HCT116 (cell line): ENCODE measurements at regions of chr10 and their contacts with region 1.

Region 1: GRCh38 chr10:121069061-121069850 is 218.1 kb downstream of the WDR11 start:
- DNase-seq: peak; percentile 32
- ATAC-seq: no peak
- H3K4me3 ChIP-seq: no peak overlapping the region
- H3K27ac ChIP-seq: no peak overlapping the region
- H3K4me1 ChIP-seq: peaks cover 0 to 12% of the 10 kb centered on the region in 2 experiments; a peak in 2 of 4 replicates
- H3K27me3 ChIP-seq: no peaks in the 10 kb centered on the region
- CTCF ChIP-seq: no peak
- POLR2A ChIP-seq: no peak
- RAD21 ChIP-seq: no peak

Region 2: GRCh38 chr10:120850911-120851865 is 218.1 kb before region 1 on chr10 and contains the start of gene WDR11:
- CTCF ChIA-PET with region 1: no interaction called
- POLR2A ChIA-PET with region 1: no interaction called
- RAD21 ChIA-PET with region 1: no interaction called
- intact Hi-C with region 1: no loop called
- DNase-seq: peak; percentile 93
- ATAC-seq: peak; percentile 98
- H3K4me3 ChIP-seq: peak within 1 kb of the TSS; percentile 85 to 92
- H3K27ac ChIP-seq: peak within 1 kb of the TSS; percentile 51
- H3K4me1 ChIP-seq: peaks cover 0 to 18% of the 10 kb centered on the region in 2 experiments; a peak in 2 of 4 replicates
- H3K27me3 ChIP-seq: no peaks in the 10 kb centered on the region
- CTCF ChIP-seq: no peak
- POLR2A ChIP-seq: peak; percentile 93
- RAD21 ChIP-seq: 0 out of 2 replicates have a peak, but pooled peaks have one; percentile 24
- total RNA-seq, gene WDR11: 48.3 TPM

Region 3: DNA sequence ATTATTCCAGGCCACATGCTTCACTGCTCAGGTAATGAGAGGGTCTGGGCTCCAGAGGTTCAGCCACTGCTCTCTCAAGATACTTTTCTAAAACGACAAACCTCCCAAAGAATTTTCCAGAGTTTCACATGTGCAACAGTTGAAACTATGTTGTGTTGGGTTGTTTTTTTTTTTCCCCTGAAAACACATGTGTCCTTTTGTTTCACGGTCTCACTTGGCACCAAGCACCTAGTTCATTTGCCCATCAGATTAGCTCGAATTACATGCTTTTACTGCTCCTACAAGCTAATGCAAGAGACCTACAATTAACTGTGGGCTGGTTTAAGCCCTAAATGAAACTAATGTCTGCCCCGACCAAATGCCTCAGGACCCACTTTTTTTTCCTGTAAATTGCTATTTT is 215.7 kb after region 1 on chr10:
- CTCF ChIA-PET with region 1: no interaction called
- POLR2A ChIA-PET with region 1: no interaction called
- RAD21 ChIA-PET with region 1: no interaction called
- intact Hi-C with region 1: no loop called
- DNase-seq: no peak
- ATAC-seq: no peak
- H3K4me3 ChIP-seq: no peak overlapping the region
- H3K27ac ChIP-seq: no peak overlapping the region
- H3K4me1 ChIP-seq: no peaks in the 10 kb centered on the region
- H3K27me3 ChIP-seq: peaks cover 43% of the 10 kb centered on the region; the same call in 1 of the 2 replicates
- CTCF ChIP-seq: no peak
- POLR2A ChIP-seq: no peak
- RAD21 ChIP-seq: no peak

Region 4: DNA sequence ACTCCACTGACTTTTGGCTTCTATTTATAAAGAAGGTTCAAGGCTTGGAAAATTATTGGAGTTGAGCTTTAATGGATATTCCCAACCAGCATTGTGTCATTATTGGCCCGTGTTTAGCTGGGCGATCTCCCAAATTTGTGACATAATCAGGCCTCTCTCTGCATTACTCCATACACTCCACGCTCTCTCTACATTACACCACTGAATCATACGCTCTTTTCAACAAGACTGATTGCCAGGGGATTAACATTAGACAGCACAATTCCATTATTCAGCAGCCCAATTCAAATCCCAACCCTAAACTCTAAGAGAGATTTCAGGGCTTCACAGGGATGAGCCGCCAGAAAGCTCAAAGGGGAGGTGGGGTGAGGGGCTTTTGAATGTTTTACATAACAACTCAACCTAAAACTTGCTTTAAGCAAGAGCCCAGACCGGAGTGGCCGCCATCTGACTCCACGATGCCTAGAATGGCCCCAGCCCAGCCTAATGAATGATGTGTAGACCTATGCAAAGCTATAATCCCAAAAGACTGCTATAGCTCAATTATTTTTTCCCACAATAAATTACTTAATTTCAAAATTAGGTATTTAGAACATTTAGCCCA is 467.2 kb after region 1 on chr10:
- CTCF ChIA-PET with region 1: no interaction called
- POLR2A ChIA-PET with region 1: no interaction called
- RAD21 ChIA-PET with region 1: no interaction called
- intact Hi-C with region 1: no loop called
- DNase-seq: no peak
- ATAC-seq: no peak
- H3K4me3 ChIP-seq: no peak overlapping the region
- H3K27ac ChIP-seq: no peak overlapping the region
- H3K4me1 ChIP-seq: no peaks in the 10 kb centered on the region
- H3K27me3 ChIP-seq: no peaks in the 10 kb centered on the region
- CTCF ChIP-seq: no peak
- POLR2A ChIP-seq: no peak
- RAD21 ChIP-seq: no peak

Region 5: DNA sequence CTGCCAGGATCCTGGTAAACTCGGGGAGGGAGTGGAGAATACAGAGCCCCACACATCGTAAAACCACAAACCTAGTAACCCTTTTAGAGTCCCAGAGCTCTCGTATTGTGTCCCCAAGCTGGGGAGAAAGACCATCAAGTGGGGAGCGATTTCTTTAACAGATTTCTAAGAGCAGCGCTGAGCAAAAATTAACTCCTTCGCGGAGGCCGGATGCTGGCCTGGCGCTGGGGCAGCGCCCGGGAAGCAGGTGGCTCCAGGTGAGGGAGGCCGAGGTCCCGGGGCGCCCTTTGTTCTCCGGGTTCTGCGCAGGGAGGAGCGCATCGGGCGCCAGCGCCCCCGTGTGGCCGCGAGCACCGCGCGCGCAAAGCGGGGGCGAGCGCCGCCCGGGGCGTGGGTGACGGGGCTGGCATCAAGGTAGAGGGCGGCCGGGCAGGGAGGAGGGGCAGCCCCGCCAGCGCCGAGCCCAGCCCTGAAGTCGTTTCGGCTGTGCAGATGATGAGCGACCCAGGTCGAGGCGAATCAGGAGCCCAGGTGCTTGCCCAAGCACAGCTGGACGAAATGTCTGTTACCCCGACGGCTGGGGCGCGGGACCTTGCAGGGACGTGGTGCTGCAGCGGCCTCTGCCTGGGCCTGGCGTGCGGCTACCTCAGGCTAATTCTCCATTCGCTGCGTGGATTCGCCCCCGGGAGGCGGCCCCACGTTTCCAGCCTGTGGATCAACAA is 539.4 kb after region 1 on chr10:
- CTCF ChIA-PET with region 1: no interaction called
- POLR2A ChIA-PET with region 1: no interaction called
- RAD21 ChIA-PET with region 1: no interaction called
- intact Hi-C with region 1: loop called (anchors 1 kb)
- DNase-seq: peak; percentile 43
- ATAC-seq: peak; percentile 95
- H3K4me3 ChIP-seq: peak overlapping the region; percentile 17 to 18
- H3K27ac ChIP-seq: no peak overlapping the region; the same call in 1 of the 2 replicates
- H3K4me1 ChIP-seq: peaks cover 7 to 17% of the 10 kb centered on the region in 2 experiments; a peak in 3 of 4 replicates
- H3K27me3 ChIP-seq: no peaks in the 10 kb centered on the region
- CTCF ChIP-seq: peak; percentile 90 to 98 (median 93)
- POLR2A ChIP-seq: no peak
- RAD21 ChIP-seq: peak; percentile 91

Region 6: GRCh38 chr10:121662945-121663917 is 594.0 kb after region 1 on chr10:
- CTCF ChIA-PET with region 1: interaction called, 7 read pairs
- POLR2A ChIA-PET with region 1: no interaction called
- RAD21 ChIA-PET with region 1: no interaction called
- intact Hi-C with region 1: loop called (anchors 1 kb)
- DNase-seq: peak; percentile 22
- ATAC-seq: peak; percentile 87
- H3K4me3 ChIP-seq: no peak overlapping the region
- H3K27ac ChIP-seq: no peak overlapping the region
- H3K4me1 ChIP-seq: peaks cover 0 to 5% of the 10 kb centered on the region in 2 experiments; a peak in 1 of 4 replicates
- H3K27me3 ChIP-seq: no peaks in the 10 kb centered on the region
- CTCF ChIP-seq: peak; percentile 47 to 78 (median 71); a peak in 5 of 6 replicates
- POLR2A ChIP-seq: no peak
- RAD21 ChIP-seq: peak; percentile 71

Region 7: DNA sequence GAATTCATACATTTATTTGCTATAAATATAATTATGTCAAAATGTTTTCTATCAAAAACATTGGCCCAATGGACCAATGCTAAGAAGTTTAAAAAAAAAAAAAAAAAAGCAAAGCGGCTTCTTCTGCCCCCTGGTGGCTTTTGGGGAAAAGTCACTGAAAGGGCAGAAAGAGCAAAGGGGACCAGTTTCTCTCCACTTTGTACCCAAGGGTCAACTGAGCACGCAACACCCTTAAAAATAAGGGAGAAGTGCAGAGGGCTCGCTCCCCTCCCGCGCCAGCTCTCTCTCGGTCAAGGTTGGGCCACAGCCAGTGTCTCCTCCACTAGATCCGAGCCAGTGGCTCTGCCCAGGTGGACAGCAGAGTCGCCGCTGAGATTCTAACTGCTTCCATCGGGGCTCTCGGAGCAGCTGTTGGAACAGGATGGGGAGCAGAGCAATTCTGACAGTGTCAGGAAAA is 665.4 kb after region 1 on chr10:
- CTCF ChIA-PET with region 1: no interaction called
- POLR2A ChIA-PET with region 1: no interaction called
- RAD21 ChIA-PET with region 1: no interaction called
- intact Hi-C with region 1: loop called (anchors 5 kb)
- DNase-seq: peak; percentile 19
- ATAC-seq: peak; percentile 64
- H3K4me3 ChIP-seq: no peak overlapping the region
- H3K27ac ChIP-seq: no peak overlapping the region
- H3K4me1 ChIP-seq: no peaks in the 10 kb centered on the region
- H3K27me3 ChIP-seq: no peaks in the 10 kb centered on the region
- CTCF ChIP-seq: peak; percentile 85 to 90 (median 89)
- POLR2A ChIP-seq: no peak
- RAD21 ChIP-seq: peak; percentile 78

Region 8: GRCh38 chr10:121886997-121887622 is 817.9 kb after region 1 on chr10:
- CTCF ChIA-PET with region 1: no interaction called
- POLR2A ChIA-PET with region 1: no interaction called
- RAD21 ChIA-PET with region 1: no interaction called
- intact Hi-C with region 1: loop called (anchors 5 kb)
- DNase-seq: peak; percentile 60
- ATAC-seq: peak; percentile 96
- H3K4me3 ChIP-seq: no peak overlapping the region
- H3K27ac ChIP-seq: no peak overlapping the region
- H3K4me1 ChIP-seq: no peaks in the 10 kb centered on the region
- H3K27me3 ChIP-seq: no peaks in the 10 kb centered on the region
- CTCF ChIP-seq: peak; percentile 80 to 98 (median 92)
- POLR2A ChIP-seq: no peak
- RAD21 ChIP-seq: peak; percentile 88